ENCODE measurements at regions of chr12 and their contacts with region 1.

Region 1: GRCh38 chr12:475291-475690 is 15.6 kb downstream of the B4GALNT3 start:
- DNase-seq: no peak
- H3K4me3 ChIP-seq: no peak overlapping the region
- H3K27ac ChIP-seq: no peak overlapping the region
- H3K4me1 ChIP-seq: peaks cover 10% of the 10 kb centered on the region
- H3K27me3 ChIP-seq: no peaks in the 10 kb centered on the region
- CTCF ChIP-seq: no peak

Region 2: GRCh38 chr12:332581-333205 is 142.6 kb before region 1 on chr12:
- dilution Hi-C with region 1: no loop called
- DNase-seq: no peak
- H3K4me3 ChIP-seq: no peak overlapping the region
- H3K27ac ChIP-seq: no peak overlapping the region
- H3K4me1 ChIP-seq: peaks cover 6% of the 10 kb centered on the region
- H3K27me3 ChIP-seq: no peaks in the 10 kb centered on the region
- CTCF ChIP-seq: no peak

Region 3: GRCh38 chr12:541676-542324 is 66.5 kb after region 1 on chr12:
- dilution Hi-C with region 1: loop called (anchors 5 kb)
- DNase-seq: no peak
- H3K4me3 ChIP-seq: no peak overlapping the region
- H3K27ac ChIP-seq: no peak overlapping the region
- H3K4me1 ChIP-seq: peaks cover 27% of the 10 kb centered on the region
- H3K27me3 ChIP-seq: no peaks in the 10 kb centered on the region
- CTCF ChIP-seq: peak in 1 of 3 experiments; percentile 41

Measured in keratinocyte (primary cell).